Activated T-helper 1 cell treated with anti-CD3 and anti-CD28 coated beads, Interleukin-12 subunit alpha, Interleukin-12 subunit beta, Interleukin-2, Interleukin-4 antibody, amounts not matched to agents 30 ng/mL and 10 ng/mL and 1 ng/mL, durations not matched to agents 14 hours and 24 hours and 36 hours (primary cell): ENCODE measurements at regions of chr20 and their contacts with region 1.

Region 1: GRCh38 chr20:56400090-56400542 is 7.7 kb downstream of the CSTF1 start:
- DNase-seq: peak; percentile 47
- H3K4me3 Mint-ChIP-seq: no peak overlapping the region
- H3K27ac Mint-ChIP-seq: peak overlapping the region; percentile 24
- H3K4me1 Mint-ChIP-seq: peaks cover 28% of the 10 kb centered on the region
- H3K27me3 Mint-ChIP-seq: no peaks in the 10 kb centered on the region

Region 2: GRCh38 chr20:56414842-56415765 is 15.0 kb after region 1 on chr20:
- intact Hi-C with region 1: loop called (anchors 2 kb)
- DNase-seq: no peak
- H3K4me3 Mint-ChIP-seq: peak overlapping the region; percentile 53
- H3K27ac Mint-ChIP-seq: peak overlapping the region; percentile 92
- H3K4me1 Mint-ChIP-seq: peaks cover 69% of the 10 kb centered on the region
- H3K27me3 Mint-ChIP-seq: no peaks in the 10 kb centered on the region

Region 3: GRCh38 chr20:56504373-56505005 is 104.4 kb after region 1 on chr20:
- intact Hi-C with region 1: loop called (anchors 1 kb)
- DNase-seq: no peak
- H3K4me3 Mint-ChIP-seq: no peak overlapping the region
- H3K27ac Mint-ChIP-seq: peak overlapping the region; percentile 63
- H3K4me1 Mint-ChIP-seq: no peaks in the 10 kb centered on the region
- H3K27me3 Mint-ChIP-seq: no peaks in the 10 kb centered on the region

Region 4: DNA sequence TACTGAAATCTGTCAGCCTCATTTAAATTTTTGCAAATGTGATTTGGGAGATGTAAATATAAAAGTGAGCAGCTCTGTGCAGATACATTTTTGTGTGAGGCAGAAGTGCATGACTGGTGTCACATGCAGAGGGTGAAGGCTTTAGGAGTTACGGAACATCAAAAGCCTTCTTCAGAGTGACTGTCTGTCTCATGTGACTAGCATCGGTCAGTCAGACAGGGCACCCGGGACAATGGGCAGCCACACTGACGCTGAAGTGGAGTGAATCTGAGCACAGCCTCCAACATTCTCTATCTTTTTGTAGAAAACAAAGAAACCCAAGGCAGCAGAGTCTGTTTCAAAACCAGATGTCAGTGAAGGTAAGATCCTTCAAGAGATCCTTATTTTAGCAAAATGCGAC is 116.5 kb after region 1 on chr20:
- intact Hi-C with region 1: loop called (anchors 1 kb)
- DNase-seq: no peak
- H3K4me3 Mint-ChIP-seq: no peak overlapping the region
- H3K27ac Mint-ChIP-seq: no peak overlapping the region
- H3K4me1 Mint-ChIP-seq: no peaks in the 10 kb centered on the region
- H3K27me3 Mint-ChIP-seq: no peaks in the 10 kb centered on the region

Region 5: DNA sequence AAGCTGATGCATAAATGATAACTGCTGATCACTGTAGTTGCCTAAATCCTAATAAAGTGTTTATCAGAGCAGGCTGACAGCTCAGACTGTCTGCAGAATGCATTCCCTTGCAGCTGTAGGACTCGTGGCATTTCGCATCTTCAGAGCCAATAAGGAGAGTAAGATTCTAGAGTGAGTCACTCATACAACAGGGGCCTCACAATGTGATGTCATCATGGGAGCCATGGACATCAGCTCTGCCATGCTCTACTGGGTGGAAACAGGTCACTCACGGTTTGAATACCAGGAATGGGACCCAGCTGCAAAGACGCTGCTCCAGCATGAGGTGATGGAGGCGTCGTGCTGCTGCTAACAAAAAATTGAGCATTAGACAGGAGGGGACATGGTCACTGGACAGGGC is 140.3 kb after region 1 on chr20:
- intact Hi-C with region 1: no loop called
- DNase-seq: no peak
- H3K4me3 Mint-ChIP-seq: no peak overlapping the region
- H3K27ac Mint-ChIP-seq: no peak overlapping the region
- H3K4me1 Mint-ChIP-seq: no peaks in the 10 kb centered on the region
- H3K27me3 Mint-ChIP-seq: no peaks in the 10 kb centered on the region

Region 6: GRCh38 chr20:57405236-57406016 is 1005.3 kb after region 1 on chr20:
- intact Hi-C with region 1: no loop called
- DNase-seq: no peak
- H3K4me3 Mint-ChIP-seq: no peak overlapping the region
- H3K27ac Mint-ChIP-seq: no peak overlapping the region
- H3K4me1 Mint-ChIP-seq: peaks cover 11% of the 10 kb centered on the region
- H3K27me3 Mint-ChIP-seq: no peaks in the 10 kb centered on the region